PC-9 (cell line): ENCODE measurements at regions of chr1 and their contacts with region 1.

Region 1: GRCh38 chr1:24528744-24529143 is 26.1 kb downstream of the RCAN3 start:
- DNase-seq: no peak
- H3K4me3 ChIP-seq: no peak overlapping the region
- H3K27ac ChIP-seq: no peak overlapping the region
- H3K4me1 ChIP-seq: no peaks in the 10 kb centered on the region
- H3K27me3 ChIP-seq: no peaks in the 10 kb centered on the region
- CTCF ChIP-seq: no peak

Region 2: DNA sequence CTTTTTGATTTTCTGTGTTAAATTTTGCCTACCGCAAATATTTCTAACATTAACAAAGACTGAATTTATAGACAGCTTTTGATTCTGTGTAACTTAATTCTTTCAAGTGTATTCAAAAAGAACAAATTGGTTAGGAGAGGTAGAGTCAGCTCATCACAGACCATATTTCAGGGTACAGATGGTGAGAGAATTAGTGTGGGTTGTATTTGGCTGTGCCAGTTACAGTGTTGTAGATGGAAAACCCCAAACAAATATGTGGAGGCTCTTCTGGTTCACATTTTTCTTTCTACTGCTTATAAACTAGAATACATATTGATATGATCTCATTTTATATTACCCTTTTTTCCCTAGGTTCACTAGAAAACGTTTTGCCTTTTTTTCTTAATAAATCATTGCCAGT is 15.0 kb before region 1 on chr1:
- CTCF ChIA-PET with region 1: no interaction called
- POLR2A ChIA-PET with region 1: interaction called, 22 read pairs
- intact Hi-C with region 1: no loop called
- DNase-seq: no peak
- H3K4me3 ChIP-seq: no peak overlapping the region
- H3K27ac ChIP-seq: no peak overlapping the region
- H3K4me1 ChIP-seq: no peaks in the 10 kb centered on the region
- H3K27me3 ChIP-seq: no peaks in the 10 kb centered on the region
- CTCF ChIP-seq: no peak